K562 (cell line): ENCODE measurements at regions of chr1 and their contacts with region 1.

Region 1: GRCh38 chr1:28914228-28915030 is at the start of gene EPB41:
- DNase-seq: peak; percentile 98 to 99 (median 99)
- ATAC-seq: peak; percentile 94
- H3K4me3 ChIP-seq: peak within 1 kb of the TSS; percentile 59
- H3K27ac ChIP-seq: peak within 1 kb of the TSS; percentile 80
- H3K4me1 ChIP-seq: peaks cover 39 to 42% of the 10 kb centered on the region in 2 experiments
- H3K27me3 ChIP-seq: no peaks in the 10 kb centered on the region
- CTCF ChIP-seq: no peak
- EP300 ChIP-seq: no peak
- POLR2A ChIP-seq: no peak; the same call in 1 of the 2 replicates
- RAD21 ChIP-seq: peak in 1 of 2 experiments; percentile 4; a peak in 1 of 4 replicates
- polyA plus RNA-seq, gene EPB41: 3.7 to 7.0 TPM

Region 2: DNA sequence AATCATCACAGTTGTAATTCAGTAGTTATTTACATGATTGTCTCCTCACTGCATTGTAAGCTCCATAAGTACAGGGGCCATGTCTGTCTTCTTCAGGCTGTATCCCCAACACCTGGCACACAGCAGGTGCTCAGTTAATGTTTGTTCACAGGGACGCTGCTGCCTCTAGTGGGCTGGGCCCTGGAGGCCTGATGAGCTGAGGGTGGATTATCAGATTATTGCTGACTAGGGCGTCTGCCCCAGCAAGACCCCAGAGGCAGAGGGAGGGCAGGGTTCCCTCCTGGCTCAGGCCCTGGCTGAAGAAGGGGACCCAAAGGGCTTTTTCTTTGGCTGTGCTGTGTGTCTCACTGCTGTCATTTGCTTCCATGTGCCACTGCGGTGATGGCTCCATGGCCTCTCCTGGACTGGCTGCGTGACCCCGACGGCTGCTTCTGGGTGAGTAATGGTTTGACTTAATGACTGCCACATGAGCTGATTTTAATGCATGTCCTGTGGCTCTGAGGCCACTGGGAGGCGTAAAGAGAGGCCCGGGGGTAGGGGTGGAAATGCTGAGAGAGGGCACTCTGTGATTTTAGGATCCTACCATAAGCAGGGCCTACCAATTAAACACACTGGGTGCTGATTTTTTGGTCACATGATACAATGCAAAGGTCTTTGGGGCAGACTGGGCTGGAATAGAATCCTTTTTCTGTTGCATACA is 20.9 kb before region 1 on chr1:
- CTCF ChIA-PET with region 1: no interaction called
- POLR2A ChIA-PET with region 1: interaction called, 10 read pairs
- in situ Hi-C with region 1: no loop called
- intact Hi-C with region 1: no loop called
- DNase-seq: peak; percentile 57 to 66 (median 64)
- ATAC-seq: peak; percentile 85
- H3K4me3 ChIP-seq: no peak overlapping the region
- H3K27ac ChIP-seq: peak overlapping the region; percentile 37; the same call in 2 of the 3 replicates
- H3K4me1 ChIP-seq: peaks cover 41 to 47% of the 10 kb centered on the region in 2 experiments
- H3K27me3 ChIP-seq: no peaks in the 10 kb centered on the region
- CTCF ChIP-seq: peak; percentile 68 to 75 (median 73)
- EP300 ChIP-seq: no peak
- POLR2A ChIP-seq: no peak
- RAD21 ChIP-seq: peak in 1 of 2 experiments; percentile 66; a peak in 2 of 4 replicates

Region 3: GRCh38 chr1:28899267-28899666 is 15.2 kb before region 1 on chr1:
- CTCF ChIA-PET with region 1: no interaction called
- POLR2A ChIA-PET with region 1: interaction called, 21 read pairs
- in situ Hi-C with region 1: no loop called
- intact Hi-C with region 1: no loop called
- DNase-seq: no peak
- ATAC-seq: no peak
- H3K4me3 ChIP-seq: no peak overlapping the region
- H3K27ac ChIP-seq: no peak overlapping the region
- H3K4me1 ChIP-seq: peaks cover 41 to 43% of the 10 kb centered on the region in 2 experiments
- H3K27me3 ChIP-seq: no peaks in the 10 kb centered on the region
- CTCF ChIP-seq: no peak
- EP300 ChIP-seq: no peak
- POLR2A ChIP-seq: no peak
- RAD21 ChIP-seq: no peak

Region 4: DNA sequence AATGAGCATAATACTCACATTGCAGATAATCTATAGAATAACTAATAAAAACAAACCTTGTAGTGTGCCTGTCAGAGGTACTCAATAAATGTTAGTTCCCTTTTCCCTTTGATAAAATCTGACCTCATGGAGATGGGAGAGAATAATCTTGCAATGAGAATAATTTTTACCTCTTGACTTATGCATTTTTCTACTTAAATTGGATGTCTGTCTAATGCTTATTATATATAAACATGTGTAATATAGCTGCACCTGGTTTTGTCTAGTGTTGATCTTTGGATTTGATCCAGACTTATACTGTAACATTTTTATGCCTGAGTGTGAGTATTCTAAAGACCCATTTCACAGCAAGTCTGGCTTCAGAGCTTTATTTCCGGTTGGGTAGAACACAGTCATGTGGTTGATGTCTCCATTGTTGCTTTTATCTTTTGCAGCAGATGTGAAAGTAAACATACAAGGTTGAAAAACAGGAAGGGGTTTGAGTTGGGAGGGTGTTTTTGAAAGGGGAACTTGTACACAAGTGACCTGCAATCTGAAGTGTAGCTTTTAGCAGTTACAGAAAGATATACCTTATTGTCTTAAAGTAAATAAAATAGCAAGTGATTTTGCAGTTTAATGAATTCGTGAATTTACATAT is 12.3 kb after region 1 on chr1:
- CTCF ChIA-PET with region 1: no interaction called
- POLR2A ChIA-PET with region 1: interaction called, 35 read pairs
- in situ Hi-C with region 1: no loop called
- intact Hi-C with region 1: no loop called
- DNase-seq: peak; percentile 56 to 91 (median 72)
- ATAC-seq: peak; percentile 89
- H3K4me3 ChIP-seq: no peak overlapping the region
- H3K27ac ChIP-seq: peak overlapping the region; percentile 86
- H3K4me1 ChIP-seq: peaks cover 30 to 34% of the 10 kb centered on the region in 2 experiments; a peak in 4 of 5 replicates
- H3K27me3 ChIP-seq: no peaks in the 10 kb centered on the region
- CTCF ChIP-seq: no peak
- EP300 ChIP-seq: peak; percentile 99
- POLR2A ChIP-seq: no peak; the same call in 1 of the 2 replicates
- RAD21 ChIP-seq: peak in 1 of 2 experiments; percentile 20; a peak in 2 of 4 replicates

Region 5: GRCh38 chr1:28976248-28976647 is 61.8 kb after region 1 on chr1:
- CTCF ChIA-PET with region 1: no interaction called
- POLR2A ChIA-PET with region 1: no interaction called
- in situ Hi-C with region 1: no loop called
- intact Hi-C with region 1: loop called (anchors 5 kb)
- DNase-seq: no peak
- ATAC-seq: no peak
- H3K4me3 ChIP-seq: no peak overlapping the region
- H3K27ac ChIP-seq: no peak overlapping the region
- H3K4me1 ChIP-seq: peaks cover 5 to 26% of the 10 kb centered on the region in 2 experiments; a peak in 2 of 5 replicates
- H3K27me3 ChIP-seq: no peaks in the 10 kb centered on the region
- CTCF ChIP-seq: no peak
- EP300 ChIP-seq: no peak
- POLR2A ChIP-seq: no peak
- RAD21 ChIP-seq: no peak

Region 6: DNA sequence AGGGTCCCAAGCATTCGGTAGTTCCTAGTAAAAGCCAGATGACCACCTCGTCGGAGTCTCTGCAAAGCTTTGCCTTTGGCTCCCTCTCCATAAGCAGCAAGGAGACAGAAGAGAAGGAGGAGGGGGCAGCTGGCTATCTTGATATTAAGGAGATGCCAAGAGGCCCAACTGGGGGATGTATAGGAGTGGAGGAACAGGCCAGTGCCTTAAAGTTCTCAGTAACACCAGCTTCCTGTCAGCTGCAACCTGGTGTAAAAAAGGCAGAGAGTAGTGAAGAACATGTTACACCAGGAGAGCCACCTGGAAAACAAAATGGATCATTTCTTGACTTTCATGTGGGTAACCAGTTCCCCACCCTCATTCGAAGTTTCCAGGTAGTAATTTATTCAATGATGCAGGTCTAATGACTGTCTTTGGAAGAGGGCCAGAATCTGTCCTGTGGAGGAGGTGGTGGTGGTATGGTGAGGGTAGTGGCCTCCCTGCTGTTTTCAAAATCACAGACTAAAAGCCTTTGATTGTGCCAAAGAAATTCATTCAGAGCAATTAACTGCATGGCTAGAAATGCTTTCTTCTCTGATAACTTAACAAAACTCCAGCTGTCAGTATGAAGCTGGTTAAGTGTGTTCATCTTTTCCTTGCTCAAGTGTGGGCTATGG is 181.9 kb after region 1 on chr1:
- CTCF ChIA-PET with region 1: no interaction called
- POLR2A ChIA-PET with region 1: no interaction called
- in situ Hi-C with region 1: no loop called
- intact Hi-C with region 1: no loop called
- DNase-seq: no peak
- ATAC-seq: no peak
- H3K4me3 ChIP-seq: no peak overlapping the region
- H3K27ac ChIP-seq: no peak overlapping the region
- H3K4me1 ChIP-seq: no peaks in the 10 kb centered on the region
- H3K27me3 ChIP-seq: no peaks in the 10 kb centered on the region
- CTCF ChIP-seq: no peak
- EP300 ChIP-seq: no peak
- POLR2A ChIP-seq: no peak
- RAD21 ChIP-seq: no peak